ENCODE measurements at regions of chr16 and their contacts with region 1.

Region 1: GRCh38 chr16:67546761-67547422 is 15.4 kb upstream of the CTCF start:
- DNase-seq: peak; percentile 88
- ATAC-seq: peak; percentile 68
- H3K4me3 Mint-ChIP-seq: no peak overlapping the region
- H3K27ac Mint-ChIP-seq: no peak overlapping the region
- H3K4me1 Mint-ChIP-seq: peaks cover 7% of the 10 kb centered on the region
- H3K27me3 Mint-ChIP-seq: peaks cover 12% of the 10 kb centered on the region
- CTCF ChIP-seq: peak; percentile 93

Region 2: GRCh38 chr16:67514382-67514828 is 32.5 kb before region 1 on chr16:
- CTCF ChIA-PET with region 1: interaction called, 184 read pairs
- POLR2A ChIA-PET with region 1: no interaction called
- DNase-seq: peak; percentile 71
- ATAC-seq: peak; percentile 64
- H3K4me3 Mint-ChIP-seq: no peak overlapping the region
- H3K27ac Mint-ChIP-seq: no peak overlapping the region
- H3K4me1 Mint-ChIP-seq: no peaks in the 10 kb centered on the region
- H3K27me3 Mint-ChIP-seq: peaks cover 34% of the 10 kb centered on the region
- CTCF ChIP-seq: peak; percentile 59

Region 3: DNA sequence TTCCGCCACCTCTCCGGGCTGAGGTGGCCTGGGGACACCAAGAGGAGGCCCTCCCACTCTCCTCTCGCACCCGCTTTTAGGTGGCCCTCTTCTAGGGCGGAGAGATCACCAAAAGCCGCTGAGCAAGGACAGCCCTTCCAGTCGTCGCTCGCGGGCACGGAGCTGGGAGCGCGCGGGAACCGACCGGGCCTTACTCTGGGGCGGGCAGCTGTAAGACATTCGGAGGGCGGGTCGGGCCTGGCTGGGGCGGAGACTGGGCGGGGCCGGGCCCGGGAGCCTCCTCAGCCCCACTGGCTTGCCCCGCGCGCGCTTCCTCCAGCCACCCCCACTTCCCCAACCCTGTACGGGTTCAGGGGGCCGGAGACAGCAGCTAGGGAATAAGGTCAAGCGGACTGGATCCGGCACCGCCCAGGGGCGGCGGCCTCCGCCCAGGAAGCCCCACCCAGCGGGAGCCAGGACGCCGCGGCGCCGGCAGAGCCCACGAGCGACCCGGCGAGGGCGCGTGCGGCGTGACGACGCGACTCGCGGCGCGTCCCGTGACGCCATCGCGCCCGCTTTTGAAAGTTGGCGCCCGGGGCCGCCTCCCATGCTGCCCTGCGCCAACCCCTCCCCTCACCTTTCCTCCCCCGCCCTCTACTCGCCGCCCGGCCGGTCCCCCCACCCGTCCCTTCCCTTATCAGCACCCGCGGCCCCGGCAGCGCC is 15.1 kb after region 1 on chr16:
- CTCF ChIA-PET with region 1: interaction called, 72 read pairs
- POLR2A ChIA-PET with region 1: interaction called, 9 read pairs
- DNase-seq: peak; percentile 94
- ATAC-seq: peak; percentile 88
- H3K4me3 Mint-ChIP-seq: peak overlapping the region; percentile 83
- H3K27ac Mint-ChIP-seq: peak overlapping the region; percentile 93
- H3K4me1 Mint-ChIP-seq: peaks cover 15% of the 10 kb centered on the region
- H3K27me3 Mint-ChIP-seq: no peaks in the 10 kb centered on the region
- CTCF ChIP-seq: no peak

Region 4: GRCh38 chr16:67613808-67614207 is 66.9 kb after region 1 on chr16:
- CTCF ChIA-PET with region 1: interaction called, 17 read pairs
- POLR2A ChIA-PET with region 1: no interaction called
- DNase-seq: peak; percentile 73
- ATAC-seq: peak; percentile 80
- H3K4me3 Mint-ChIP-seq: no peak overlapping the region
- H3K27ac Mint-ChIP-seq: no peak overlapping the region
- H3K4me1 Mint-ChIP-seq: no peaks in the 10 kb centered on the region
- H3K27me3 Mint-ChIP-seq: no peaks in the 10 kb centered on the region
- CTCF ChIP-seq: peak; percentile 40; the same call in 1 of the 2 replicates

Region 5: DNA sequence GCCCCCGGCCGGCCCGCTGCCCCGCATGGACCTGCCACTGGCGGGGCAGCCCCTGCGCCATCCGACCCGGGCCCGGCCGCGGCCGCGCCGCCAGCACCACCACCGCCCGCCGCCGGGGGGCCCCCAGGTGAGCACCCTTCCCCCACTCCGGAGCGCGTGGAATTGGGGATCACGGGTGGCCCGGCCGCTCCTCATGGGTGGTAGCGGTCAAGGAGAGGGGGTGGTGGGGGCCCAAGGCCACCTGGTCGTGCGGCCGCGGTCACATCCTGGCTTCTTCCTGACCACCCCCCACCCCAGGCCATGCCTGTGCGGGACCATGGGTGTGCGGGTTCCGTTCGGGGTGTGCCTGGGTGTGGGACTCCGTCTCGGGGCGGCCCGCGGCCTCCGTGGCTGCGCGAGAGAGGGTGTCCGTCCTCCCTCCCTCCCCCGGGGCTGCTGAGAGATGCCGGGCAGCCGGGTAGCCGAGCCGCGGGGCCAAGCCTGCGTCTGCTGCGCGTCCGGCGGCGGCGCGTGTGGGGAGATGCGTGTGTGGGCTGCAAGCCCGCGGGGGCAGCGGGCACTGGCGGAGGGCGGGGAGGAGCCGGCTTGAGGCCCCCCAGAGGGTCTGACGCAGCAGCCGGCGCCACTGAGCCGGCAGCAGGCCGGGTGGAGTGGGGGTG is 106.4 kb after region 1 on chr16:
- CTCF ChIA-PET with region 1: interaction called, 197 read pairs
- POLR2A ChIA-PET with region 1: interaction called, 3 read pairs
- DNase-seq: no peak
- ATAC-seq: peak; percentile 28
- H3K4me3 Mint-ChIP-seq: peak overlapping the region; percentile 72
- H3K27ac Mint-ChIP-seq: no peak overlapping the region
- H3K4me1 Mint-ChIP-seq: peaks cover 12% of the 10 kb centered on the region
- H3K27me3 Mint-ChIP-seq: peaks cover 69% of the 10 kb centered on the region
- CTCF ChIP-seq: no peak

Region 6: DNA sequence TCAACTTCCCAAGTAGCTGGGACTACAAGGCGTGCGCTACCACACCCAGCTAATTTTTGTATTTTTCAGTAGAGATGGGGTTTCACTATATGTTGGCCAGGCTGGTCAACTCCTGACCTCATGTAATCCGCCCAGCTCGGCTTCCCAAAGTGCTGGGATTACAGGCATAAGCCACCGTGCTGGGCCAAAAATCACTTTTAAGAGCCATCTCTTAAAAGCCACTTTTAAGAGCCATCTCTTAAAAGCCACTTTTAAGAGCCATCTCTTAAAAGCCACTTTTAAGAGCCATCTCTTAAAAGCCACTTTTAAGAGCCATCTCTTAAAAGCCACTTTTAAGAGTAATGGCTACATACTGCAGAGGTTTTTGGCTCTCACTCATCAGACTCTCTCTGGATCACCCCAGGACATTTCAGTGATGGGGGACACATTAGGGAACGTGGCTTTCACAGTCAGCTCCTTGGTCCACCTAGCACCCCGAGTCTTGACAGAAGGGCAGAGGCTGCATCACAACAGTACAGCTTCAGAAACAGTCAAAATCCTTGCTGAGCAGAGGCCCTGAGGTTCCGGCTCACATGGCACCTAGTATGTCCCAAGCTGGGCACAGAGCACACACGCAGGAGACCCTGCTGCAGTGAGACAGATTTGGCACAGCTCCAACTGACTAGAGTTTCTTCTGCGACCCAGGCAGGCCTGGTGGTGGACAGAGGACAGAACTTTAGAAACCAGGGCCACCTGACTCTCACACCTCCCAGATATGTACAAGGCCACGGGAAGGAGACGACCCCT is 235.9 kb after region 1 on chr16:
- CTCF ChIA-PET with region 1: no interaction called
- POLR2A ChIA-PET with region 1: no interaction called
- DNase-seq: no peak
- ATAC-seq: no peak
- H3K4me3 Mint-ChIP-seq: no peak overlapping the region
- H3K27ac Mint-ChIP-seq: no peak overlapping the region
- H3K4me1 Mint-ChIP-seq: peaks cover 6% of the 10 kb centered on the region
- H3K27me3 Mint-ChIP-seq: no peaks in the 10 kb centered on the region
- CTCF ChIP-seq: no peak